AG04449 (cell line): ENCODE measurements at regions of chr12 and their contacts with region 1.

Region 1: GRCh38 chr12:104877123-104877705 is 80.9 kb downstream of the SLC41A2 start:
- DNase-seq: peak; percentile 9
- H3K4me3 ChIP-seq: no peak overlapping the region
- CTCF ChIP-seq: peak; percentile 60

Region 2: GRCh38 chr12:103986829-103987228 is 890.4 kb before region 1 on chr12:
- CTCF ChIA-PET with region 1: no interaction called
- POLR2A ChIA-PET with region 1: no interaction called
- DNase-seq: peak; percentile 75
- H3K4me3 ChIP-seq: no peak overlapping the region
- CTCF ChIP-seq: no peak

Region 3: DNA sequence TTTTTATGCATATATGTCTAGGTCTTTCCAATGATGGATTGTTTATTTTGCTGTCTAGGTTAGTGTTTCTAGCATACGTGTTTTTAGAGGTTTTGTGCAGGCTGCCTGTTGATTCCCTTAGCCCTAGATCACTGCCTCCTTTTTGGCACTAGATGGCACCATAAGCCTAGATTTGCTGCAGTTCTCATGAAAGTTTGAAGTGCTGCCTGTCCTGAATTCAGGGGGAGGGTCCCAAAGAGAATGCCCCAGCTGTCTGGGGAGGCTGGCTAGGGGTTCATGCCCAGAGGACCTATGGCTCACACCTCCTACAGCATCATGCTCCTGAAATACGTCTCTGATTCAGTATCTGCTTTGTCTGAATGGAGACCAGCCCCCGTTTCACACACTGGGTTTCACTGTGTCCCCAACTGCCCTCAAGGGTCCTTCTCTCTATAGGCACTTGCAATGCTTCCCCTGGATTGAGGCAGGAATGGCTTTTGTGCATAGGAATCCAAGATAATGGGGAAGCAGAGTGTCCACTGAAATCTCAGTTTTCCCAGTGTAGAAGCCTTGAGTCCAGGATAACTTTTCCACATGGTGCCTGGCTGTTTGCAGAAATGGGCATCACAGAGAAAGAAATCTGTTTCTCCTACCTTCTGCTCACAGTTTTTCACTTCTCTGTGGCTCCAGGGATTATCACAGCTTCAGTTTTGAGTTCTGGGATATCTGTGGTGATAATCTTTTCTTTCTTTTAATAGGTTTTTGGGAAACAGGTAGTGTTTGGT is 675.8 kb before region 1 on chr12:
- CTCF ChIA-PET with region 1: interaction called, 13 read pairs
- POLR2A ChIA-PET with region 1: no interaction called
- DNase-seq: no peak
- H3K4me3 ChIP-seq: no peak overlapping the region
- CTCF ChIP-seq: peak; percentile 79

Region 4: DNA sequence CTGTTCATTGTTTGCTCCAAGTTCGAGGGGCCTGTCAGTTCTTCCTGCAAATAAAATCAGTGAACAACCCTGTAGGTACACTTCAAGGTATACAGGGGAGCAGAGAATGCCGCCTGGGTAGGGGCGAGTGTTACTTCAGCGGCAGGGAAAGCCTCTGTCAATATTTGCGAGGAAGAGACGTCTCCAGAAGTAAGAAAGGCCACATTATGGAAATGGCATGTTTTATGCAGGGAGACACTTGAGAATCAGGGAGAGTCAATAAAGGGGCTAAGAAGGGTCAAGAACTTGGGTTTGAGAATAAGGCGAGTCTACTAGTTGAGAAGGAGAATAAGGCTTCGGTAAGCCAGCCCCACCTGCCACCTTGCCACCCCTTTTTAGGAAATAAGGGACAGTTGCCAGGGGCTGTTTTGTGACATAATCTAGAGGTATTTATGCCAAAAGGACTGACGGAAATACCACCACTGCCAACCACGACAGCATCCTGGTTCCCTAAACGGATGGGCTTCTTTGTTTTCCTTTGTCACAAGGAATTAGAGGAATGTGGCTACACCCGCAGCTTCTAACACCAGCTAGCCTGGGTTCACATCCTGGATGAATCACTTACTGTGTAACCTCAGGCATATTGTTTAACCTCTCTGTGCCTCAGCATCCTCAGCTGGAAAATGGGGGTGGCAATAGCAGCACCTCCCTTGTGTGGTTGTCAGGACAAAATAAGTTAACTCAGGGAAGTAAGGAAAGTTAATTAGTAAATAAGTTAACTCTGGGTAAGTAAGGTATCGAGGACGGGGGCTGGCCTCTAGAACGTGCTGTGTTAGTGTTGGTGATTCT is 506.0 kb before region 1 on chr12:
- CTCF ChIA-PET with region 1: interaction called, 18 read pairs
- POLR2A ChIA-PET with region 1: no interaction called
- DNase-seq: no peak
- H3K4me3 ChIP-seq: no peak overlapping the region
- CTCF ChIP-seq: no peak

Region 5: GRCh38 chr12:104456950-104457745 is 420.1 kb before region 1 on chr12:
- CTCF ChIA-PET with region 1: interaction called, 14 read pairs
- POLR2A ChIA-PET with region 1: no interaction called
- DNase-seq: peak; percentile 9
- H3K4me3 ChIP-seq: peak overlapping the region; percentile 89
- CTCF ChIP-seq: peak; percentile 28

Region 6: GRCh38 chr12:104682751-104683279 is 194.4 kb before region 1 on chr12:
- CTCF ChIA-PET with region 1: interaction called, 11 read pairs
- POLR2A ChIA-PET with region 1: no interaction called
- DNase-seq: no peak
- H3K4me3 ChIP-seq: no peak overlapping the region
- CTCF ChIP-seq: no peak

Region 7: DNA sequence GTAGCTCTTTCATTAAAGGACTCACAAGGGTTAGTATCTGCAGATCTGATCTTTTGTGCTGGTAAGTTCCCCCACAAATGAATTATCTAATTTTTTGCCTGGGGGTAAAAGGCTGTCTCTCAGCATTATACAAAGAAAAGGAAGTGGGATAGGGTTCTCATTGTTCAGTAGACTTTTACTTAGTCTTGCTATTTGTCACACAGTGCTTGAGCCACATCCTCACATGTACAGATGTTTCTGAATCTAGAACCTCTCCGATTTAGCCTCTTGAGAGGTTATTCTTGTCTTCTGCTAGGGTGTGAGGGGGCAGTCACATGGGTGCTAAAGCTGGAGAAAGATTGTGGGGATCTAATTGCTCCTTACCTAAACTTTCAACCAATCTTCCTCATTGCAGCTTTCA is 12.1 kb before region 1 on chr12:
- CTCF ChIA-PET with region 1: interaction called, 14 read pairs
- POLR2A ChIA-PET with region 1: no interaction called
- DNase-seq: no peak
- H3K4me3 ChIP-seq: no peak overlapping the region
- CTCF ChIP-seq: no peak

Region 8: DNA sequence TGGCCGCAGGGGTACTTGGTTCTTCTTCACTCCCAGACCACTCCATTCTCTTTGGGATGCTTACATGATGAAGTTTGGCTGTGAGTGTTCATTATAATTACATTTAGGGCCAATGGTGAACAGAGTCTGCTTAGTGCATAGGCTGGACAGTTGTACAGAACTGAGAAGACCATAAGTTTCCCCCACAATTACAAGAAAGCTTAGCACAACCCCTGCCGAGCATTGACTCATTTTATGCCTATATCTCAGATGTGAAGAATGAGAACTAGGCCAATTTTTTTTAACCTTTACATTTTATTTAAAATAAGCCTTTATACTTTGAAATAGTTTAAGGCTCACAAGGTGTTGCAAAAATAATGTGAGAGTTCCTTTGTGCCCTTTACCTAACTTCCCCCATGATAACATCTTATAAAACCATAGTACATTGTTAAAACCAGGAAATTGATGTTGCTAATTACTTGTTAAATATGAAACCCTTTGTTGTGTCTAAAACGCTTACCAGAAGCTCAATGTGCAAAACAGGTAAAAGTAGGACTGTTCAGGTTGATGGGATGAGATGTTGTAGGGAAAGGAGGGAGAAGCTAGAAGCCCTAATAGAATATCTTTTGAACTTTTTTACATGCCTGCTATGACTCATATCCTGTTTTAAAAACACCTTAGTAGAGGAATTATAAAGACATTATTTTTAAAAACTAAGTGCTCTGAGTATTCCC is 159.9 kb after region 1 on chr12:
- CTCF ChIA-PET with region 1: no interaction called
- POLR2A ChIA-PET with region 1: no interaction called
- DNase-seq: no peak
- H3K4me3 ChIP-seq: no peak overlapping the region
- CTCF ChIP-seq: no peak